Breast epithelium (tissue), 4 donors: ENCODE measurements at regions of chr5 and their contacts with region 1.

Region 1: GRCh38 chr5:95907067-95907705 is 54.5 kb downstream of the ELL2 start:
- DNase-seq: no peak
- H3K4me3 ChIP-seq: no peak overlapping the region
- H3K27ac ChIP-seq: no peak overlapping the region
- H3K4me1 ChIP-seq: no peaks in the 10 kb centered on the region
- H3K27me3 ChIP-seq: no peaks in the 10 kb centered on the region
- CTCF ChIP-seq: no peak
- POLR2A ChIP-seq: no peak

Region 2: GRCh38 chr5:95883613-95884325 is 23.4 kb before region 1 on chr5:
- intact Hi-C with region 1: loop called (anchors 1 kb)
- DNase-seq: no peak
- H3K4me3 ChIP-seq: no peak overlapping the region
- H3K27ac ChIP-seq: peak overlapping the region; percentile 4 to 8
- H3K4me1 ChIP-seq: no peaks in the 10 kb centered on the region
- H3K27me3 ChIP-seq: no peaks in the 10 kb centered on the region
- CTCF ChIP-seq: no peak
- POLR2A ChIP-seq: no peak

Region 3: DNA sequence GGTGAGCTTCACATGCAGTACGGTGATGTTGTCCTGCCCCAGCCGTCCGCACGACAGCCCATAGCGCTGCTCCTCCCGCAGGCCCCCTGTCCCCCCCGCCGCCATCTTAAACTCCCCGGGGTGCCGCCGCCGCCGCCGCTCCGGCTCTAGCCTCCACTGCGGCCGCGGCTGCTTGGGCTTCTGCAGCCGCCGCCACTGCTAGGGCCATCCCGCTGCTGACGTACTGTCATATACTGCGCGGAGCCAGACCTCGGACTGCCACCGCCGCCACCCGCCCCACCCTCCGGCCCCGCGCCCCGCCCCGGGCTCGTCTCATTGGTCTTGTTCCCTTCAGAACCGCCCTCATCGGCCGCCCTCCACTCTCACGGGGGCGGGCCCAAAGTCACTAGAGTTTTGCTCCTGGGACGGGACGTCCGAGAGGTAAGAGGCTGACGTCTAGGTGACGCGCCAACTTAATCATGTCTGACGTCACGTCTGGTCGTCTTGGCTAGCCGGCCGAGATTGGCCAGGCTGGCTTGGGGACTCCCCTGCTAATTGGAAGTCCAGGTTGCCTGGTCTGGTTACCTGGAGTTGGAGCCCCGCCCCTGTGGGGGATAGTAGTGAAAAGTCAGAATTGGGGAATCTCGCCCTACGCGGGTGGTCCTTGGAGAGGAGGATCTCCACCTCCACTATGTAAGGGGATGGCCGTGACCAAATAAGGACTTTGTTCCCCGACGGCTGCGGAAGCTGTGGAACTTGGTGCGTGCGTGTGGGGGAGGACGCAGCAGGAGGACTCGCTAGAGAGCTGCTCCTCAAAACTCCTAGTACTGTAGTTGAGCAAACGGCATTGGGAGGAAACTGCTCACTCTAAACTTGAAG is 54.7 kb after region 1 on chr5 and contains the start of gene ELL2:
- intact Hi-C with region 1: no loop called
- DNase-seq: peak; percentile 98 to 100
- H3K4me3 ChIP-seq: peak within 1 kb of the TSS; percentile 79 to 95 (median 85)
- H3K27ac ChIP-seq: peak within 1 kb of the TSS; percentile 98 to 99
- H3K4me1 ChIP-seq: no peaks in the 10 kb centered on the region
- H3K27me3 ChIP-seq: no peaks in the 10 kb centered on the region
- CTCF ChIP-seq: no peak
- POLR2A ChIP-seq: peak; percentile 78
- total RNA-seq, gene ELL2: 95.7 to 211 (median 168) TPM